RWPE1 (cell line): ENCODE measurements at regions of chr16 and their contacts with region 1.

Region 1: GRCh38 chr16:57091975-57092785 is at the start of gene CPNE2:
- DNase-seq: peak; percentile 60
- H3K27ac ChIP-seq: peak within 1 kb of the TSS; percentile 77
- CTCF ChIP-seq: no peak

Region 2: GRCh38 chr16:57102888-57103858 is 11.0 kb after region 1 on chr16:
- CTCF ChIA-PET with region 1: interaction called, 11 read pairs
- POLR2A ChIA-PET with region 1: no interaction called
- DNase-seq: no peak
- H3K27ac ChIP-seq: peak overlapping the region; percentile 64
- CTCF ChIP-seq: no peak